ENCODE measurements at regions of chr14 and their contacts with region 1.

Region 1: GRCh38 chr14:100645192-100645990 is 58.2 kb upstream of the BEGAIN start:
- DNase-seq: peak; percentile 97
- H3K4me3 Mint-ChIP-seq: peak overlapping the region; percentile 52
- H3K27ac Mint-ChIP-seq: no peak overlapping the region
- H3K4me1 Mint-ChIP-seq: peaks cover 49% of the 10 kb centered on the region
- H3K27me3 Mint-ChIP-seq: peaks cover 17% of the 10 kb centered on the region

Region 2: GRCh38 chr14:100383727-100384158 is 261.6 kb before region 1 on chr14:
- intact Hi-C with region 1: loop called (anchors 1 kb)
- DNase-seq: peak; percentile 90
- H3K4me3 Mint-ChIP-seq: no peak overlapping the region
- H3K27ac Mint-ChIP-seq: no peak overlapping the region
- H3K4me1 Mint-ChIP-seq: peaks cover 15% of the 10 kb centered on the region
- H3K27me3 Mint-ChIP-seq: no peaks in the 10 kb centered on the region

Region 3: DNA sequence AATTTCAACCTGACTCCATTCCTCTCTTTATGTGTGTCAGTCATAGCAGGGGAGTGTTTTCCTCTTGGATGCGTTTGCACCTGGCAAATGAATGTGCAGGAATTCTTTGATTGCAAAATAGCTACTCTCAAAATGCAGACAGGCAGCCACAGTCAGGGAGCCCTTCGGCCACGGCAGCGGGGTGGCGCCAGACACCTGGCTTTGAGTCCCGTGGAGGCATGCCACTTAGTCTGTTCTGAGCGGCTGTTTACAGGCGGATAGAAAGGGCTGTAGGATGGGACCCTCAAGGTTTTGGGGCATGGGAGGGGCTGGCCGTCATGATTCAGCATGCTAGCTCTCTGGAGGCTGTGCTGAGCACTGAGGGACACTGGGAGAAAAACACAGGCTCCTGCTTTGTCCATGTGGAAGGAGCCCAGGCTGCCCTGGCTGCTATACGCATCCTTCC is 205.2 kb before region 1 on chr14:
- intact Hi-C with region 1: loop called (anchors 2 kb)
- DNase-seq: peak; percentile 78
- H3K4me3 Mint-ChIP-seq: no peak overlapping the region
- H3K27ac Mint-ChIP-seq: no peak overlapping the region
- H3K4me1 Mint-ChIP-seq: peaks cover 23% of the 10 kb centered on the region
- H3K27me3 Mint-ChIP-seq: no peaks in the 10 kb centered on the region

Region 4: DNA sequence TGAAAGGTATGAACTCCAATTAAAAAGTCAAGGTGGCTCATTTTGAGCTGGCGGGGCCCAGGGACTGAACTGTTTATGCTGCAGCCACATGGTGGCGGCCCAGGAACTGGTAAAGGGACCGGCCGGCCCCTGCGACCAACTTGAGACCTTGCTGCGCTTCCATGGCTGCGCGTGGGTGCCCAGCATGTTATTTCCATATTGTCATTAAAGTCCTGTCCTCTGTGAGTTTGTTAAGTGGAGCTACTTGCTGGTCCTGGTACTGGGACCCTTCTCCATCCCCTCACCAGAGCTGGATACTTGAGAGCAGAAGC is 120.5 kb before region 1 on chr14:
- intact Hi-C with region 1: loop called (anchors 1 kb)
- DNase-seq: peak; percentile 74
- H3K4me3 Mint-ChIP-seq: no peak overlapping the region
- H3K27ac Mint-ChIP-seq: no peak overlapping the region
- H3K4me1 Mint-ChIP-seq: no peaks in the 10 kb centered on the region
- H3K27me3 Mint-ChIP-seq: peaks cover 7% of the 10 kb centered on the region

Region 5: DNA sequence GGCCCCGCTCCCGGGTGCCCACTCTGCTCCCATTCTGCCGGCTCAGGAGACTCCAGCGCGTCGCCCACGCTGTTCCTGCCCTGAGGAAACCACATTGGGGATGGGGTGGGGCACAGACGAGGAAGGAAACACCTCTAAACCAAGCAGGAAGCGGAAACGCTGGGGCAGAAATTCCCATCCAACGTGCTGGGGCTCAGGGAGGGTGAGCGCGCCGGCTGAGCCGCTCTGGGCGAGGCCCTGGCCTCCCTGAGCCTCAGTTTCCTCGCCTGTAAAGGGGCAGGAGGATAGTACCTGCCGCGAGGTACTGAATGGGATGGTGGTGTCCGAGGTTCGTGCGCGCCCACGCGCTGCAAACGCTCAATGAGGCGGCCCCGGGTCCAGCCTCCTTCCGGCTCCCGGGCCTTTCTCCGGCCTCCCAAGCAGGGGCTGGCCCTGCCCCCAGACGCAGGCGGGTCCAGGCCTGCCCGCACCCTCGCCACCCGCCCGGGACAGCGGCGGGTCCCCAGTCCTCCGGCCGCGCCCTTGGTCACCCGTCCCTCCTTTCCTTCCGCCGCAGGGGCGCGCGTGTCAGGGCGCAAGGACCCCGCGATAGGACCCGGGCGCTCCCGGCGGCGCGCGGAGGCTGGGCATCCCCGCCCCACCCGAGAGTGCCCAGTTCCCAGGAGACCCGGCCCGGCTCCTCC is 58.8 kb before region 1 on chr14:
- intact Hi-C with region 1: loop called (anchors 2 kb)
- DNase-seq: peak; percentile 71
- H3K4me3 Mint-ChIP-seq: peak overlapping the region; percentile 72
- H3K27ac Mint-ChIP-seq: no peak overlapping the region
- H3K4me1 Mint-ChIP-seq: no peaks in the 10 kb centered on the region
- H3K27me3 Mint-ChIP-seq: peaks cover 23% of the 10 kb centered on the region

Region 6: DNA sequence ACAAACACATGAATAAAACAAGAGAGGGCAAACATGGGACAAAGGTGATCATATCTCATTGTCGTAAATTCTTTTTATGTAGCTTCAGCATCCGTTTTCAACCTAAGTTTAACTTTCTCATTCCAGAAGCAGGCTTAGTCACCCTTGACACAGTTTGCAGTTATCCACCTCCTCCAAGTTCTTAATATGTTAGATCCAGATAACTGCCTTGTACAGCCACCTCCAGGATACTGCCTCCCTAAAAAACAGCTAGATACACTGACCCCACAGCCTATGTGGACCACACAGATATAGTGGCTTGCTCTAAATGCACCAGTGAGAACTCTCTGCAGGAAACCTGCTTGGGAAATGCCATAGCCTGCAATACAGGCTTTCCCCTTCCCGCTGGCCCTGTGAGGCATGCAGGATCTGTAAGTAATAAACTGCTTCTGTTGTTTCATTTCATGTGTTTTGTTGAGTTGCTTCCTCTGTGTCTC is 269.2 kb after region 1 on chr14:
- intact Hi-C with region 1: no loop called
- DNase-seq: peak; percentile 43
- H3K4me3 Mint-ChIP-seq: no peak overlapping the region
- H3K27ac Mint-ChIP-seq: no peak overlapping the region
- H3K4me1 Mint-ChIP-seq: no peaks in the 10 kb centered on the region
- H3K27me3 Mint-ChIP-seq: peaks cover 2% of the 10 kb centered on the region

Measured in activated CD4-positive, alpha-beta T cell treated with anti-CD3 and anti-CD28 coated beads, Interleukin-2, amount 10 ng/mL, durations not matched to agents 24 days and 14 days (primary cell).